CD8-positive, alpha-beta memory T cell (primary cell): ENCODE measurements at regions of chr1 and their contacts with region 1.

Region 1: DNA sequence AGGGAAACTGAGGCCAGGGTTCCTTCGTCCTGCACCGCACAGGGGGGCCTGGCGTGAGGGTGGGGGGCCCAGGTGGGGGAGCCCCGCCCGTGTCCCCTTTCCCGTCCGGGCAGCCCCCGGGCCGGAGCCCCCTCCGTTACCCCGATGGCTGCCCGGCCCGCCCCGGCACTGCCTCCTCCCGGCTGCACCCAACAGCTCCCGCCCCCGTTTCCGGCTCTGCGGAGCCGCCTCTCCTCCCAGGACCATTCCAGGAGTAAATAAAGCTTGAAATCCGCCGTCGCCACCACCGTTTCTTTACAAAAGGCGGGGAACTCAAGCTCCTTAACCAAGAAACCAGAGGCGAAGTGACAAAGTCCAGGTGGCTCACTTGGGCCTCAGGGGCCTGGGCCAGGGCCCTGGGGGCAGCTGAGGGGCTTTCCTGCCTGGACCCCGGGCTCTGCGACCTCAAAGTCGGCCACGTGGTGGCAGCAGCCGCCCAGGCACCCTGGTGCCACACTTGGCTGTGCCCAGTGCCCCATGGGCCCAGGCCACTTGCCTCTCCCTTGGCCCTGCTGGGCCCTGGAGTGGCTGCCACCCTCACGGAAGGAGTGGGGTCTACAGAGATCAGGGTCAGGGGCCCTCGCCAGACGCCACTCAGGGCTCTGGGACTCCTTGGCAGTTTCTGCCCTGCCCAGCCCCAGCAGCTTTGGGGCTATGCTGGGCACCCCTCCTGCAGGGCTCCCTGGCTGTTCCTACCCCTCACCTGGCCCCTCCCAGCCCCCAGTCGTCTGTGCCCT is 514 bp upstream of the FAAP20 start:
- DNase-seq: peak; percentile 85 to 94 (median 92)
- H3K4me3 ChIP-seq: peak overlapping the region; percentile 80
- H3K4me3 Mint-ChIP-seq: peak overlapping the region; percentile 80 to 95 (median 87)
- H3K27ac ChIP-seq: peak overlapping the region; percentile 78
- H3K27ac Mint-ChIP-seq: peak overlapping the region; percentile 87 to 98 (median 92)
- H3K4me1 ChIP-seq: peaks cover 35% of the 10 kb centered on the region
- H3K4me1 Mint-ChIP-seq: peaks cover 20 to 38% (median 21%) of the 10 kb centered on the region in 3 donors
- H3K27me3 ChIP-seq: no peaks in the 10 kb centered on the region
- H3K27me3 Mint-ChIP-seq: no peaks in the 10 kb centered on the region

Region 2: GRCh38 chr1:2133039-2133878 is 61.8 kb before region 1 on chr1:
- CTCF ChIA-PET with region 1: interaction called, 11 read pairs
- POLR2A ChIA-PET with region 1: no interaction called
- DNase-seq: peak; percentile 97 to 99 (median 97)
- H3K4me3 ChIP-seq: peak overlapping the region; percentile 53
- H3K4me3 Mint-ChIP-seq: peak overlapping the region; percentile 80 to 94 (median 83)
- H3K27ac ChIP-seq: peak overlapping the region; percentile 64
- H3K27ac Mint-ChIP-seq: peak overlapping the region; percentile 86 to 97 (median 94)
- H3K4me1 ChIP-seq: peaks cover 10% of the 10 kb centered on the region
- H3K4me1 Mint-ChIP-seq: peaks cover 15 to 42% (median 21%) of the 10 kb centered on the region in 3 donors
- H3K27me3 ChIP-seq: no peaks in the 10 kb centered on the region
- H3K27me3 Mint-ChIP-seq: no peaks in the 10 kb centered on the region

Region 3: GRCh38 chr1:2227346-2228153 is 32.5 kb after region 1 on chr1:
- CTCF ChIA-PET with region 1: interaction called, 23 read pairs
- POLR2A ChIA-PET with region 1: interaction called, 10 read pairs
- DNase-seq: peak; percentile 86 to 96 (median 95)
- H3K4me3 ChIP-seq: no peak overlapping the region
- H3K4me3 Mint-ChIP-seq: peak overlapping the region in 6 of 7 donors; percentile 61 to 90 (median 74)
- H3K27ac ChIP-seq: peak overlapping the region; percentile 51
- H3K27ac Mint-ChIP-seq: peak overlapping the region in 4 of 8 donors; percentile 60 to 86 (median 74)
- H3K4me1 ChIP-seq: peaks cover 26% of the 10 kb centered on the region
- H3K4me1 Mint-ChIP-seq: peaks cover 27 to 40% (median 36%) of the 10 kb centered on the region in 3 donors
- H3K27me3 ChIP-seq: no peaks in the 10 kb centered on the region
- H3K27me3 Mint-ChIP-seq: peaks cover 0 to 12% of the 10 kb centered on the region in 2 donors

Region 4: GRCh38 chr1:2314803-2315673 is 120.0 kb after region 1 on chr1:
- CTCF ChIA-PET with region 1: interaction called, 21 read pairs
- POLR2A ChIA-PET with region 1: interaction called, 10 read pairs
- DNase-seq: peak; percentile 58 to 84 (median 75)
- H3K4me3 ChIP-seq: peak overlapping the region; percentile 55
- H3K4me3 Mint-ChIP-seq: peak overlapping the region in 4 of 7 donors; percentile 41 to 74 (median 56)
- H3K27ac ChIP-seq: peak overlapping the region; percentile 38
- H3K27ac Mint-ChIP-seq: peak overlapping the region in 7 of 8 donors; percentile 30 to 96 (median 59)
- H3K4me1 ChIP-seq: peaks cover 44% of the 10 kb centered on the region
- H3K4me1 Mint-ChIP-seq: peaks cover 7 to 49% (median 10%) of the 10 kb centered on the region in 3 donors
- H3K27me3 ChIP-seq: no peaks in the 10 kb centered on the region
- H3K27me3 Mint-ChIP-seq: no peaks in the 10 kb centered on the region

Region 5: DNA sequence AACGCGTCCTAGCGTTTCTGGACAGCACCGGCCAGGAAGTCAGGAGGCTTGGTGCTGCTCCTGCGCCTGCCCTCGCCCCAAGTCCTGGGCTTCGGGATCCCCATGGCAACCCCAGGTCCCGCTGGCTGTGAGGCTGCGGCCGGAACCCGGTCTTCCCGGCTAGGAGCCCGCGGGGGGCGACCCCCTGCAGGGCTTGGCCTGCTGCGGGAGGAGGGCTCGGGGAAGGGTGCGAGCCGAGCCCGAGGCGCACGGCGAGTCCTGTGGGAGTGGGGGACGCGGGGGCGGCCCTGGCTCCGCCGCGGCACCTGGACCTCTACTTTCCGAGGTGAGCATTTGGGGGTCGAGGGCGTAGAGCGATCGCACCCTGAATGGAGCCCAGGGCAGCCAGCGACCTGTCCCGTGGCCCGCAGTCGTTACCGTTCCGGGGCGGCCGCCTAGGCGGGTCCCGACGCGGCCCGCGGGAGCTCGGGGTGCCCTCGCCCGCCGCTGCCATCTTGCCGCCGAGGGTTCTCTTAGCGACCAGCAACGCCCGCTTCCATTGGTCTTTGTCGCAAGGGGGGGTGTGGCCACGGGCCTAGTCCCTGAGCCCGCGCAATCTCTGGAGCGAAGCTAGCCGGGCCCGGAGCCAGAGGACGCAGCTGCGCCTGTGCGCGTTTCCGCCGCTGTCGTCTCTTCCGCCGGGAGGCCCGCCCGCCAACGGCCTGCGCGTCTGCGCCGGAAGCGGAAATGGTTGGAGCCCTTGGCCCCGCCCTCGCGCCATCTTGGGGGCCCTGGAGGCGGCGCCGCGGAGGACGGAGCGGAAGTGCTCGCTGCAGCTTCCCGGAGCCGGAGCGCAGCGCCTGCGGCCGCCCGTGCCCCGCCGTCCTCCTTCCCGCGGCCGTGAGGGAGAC is 196.2 kb after region 1 on chr1 and contains the starts of genes MORN1 and RER1:
- CTCF ChIA-PET with region 1: interaction called, 22 read pairs
- POLR2A ChIA-PET with region 1: interaction called, 15 read pairs
- DNase-seq: peak; percentile 98 to 99 (median 99)
- H3K4me3 ChIP-seq: peak within 1 kb of the TSS; percentile 73
- H3K4me3 Mint-ChIP-seq: peak within 1 kb of the TSS; percentile 87 to 98 (median 90)
- H3K27ac ChIP-seq: peak within 1 kb of the TSS; percentile 82
- H3K27ac Mint-ChIP-seq: peak within 1 kb of the TSS; percentile 84 to 98 (median 92)
- H3K4me1 ChIP-seq: peaks cover 34% of the 10 kb centered on the region
- H3K4me1 Mint-ChIP-seq: peaks cover 27 to 49% (median 34%) of the 10 kb centered on the region in 3 donors
- H3K27me3 ChIP-seq: no peaks in the 10 kb centered on the region
- H3K27me3 Mint-ChIP-seq: no peaks in the 10 kb centered on the region
- total RNA-seq, gene MORN1: 9.4 to 10.4 TPM
- total RNA-seq, gene RER1: 214 to 222 TPM